ENCODE measurements at regions of chr2 and their contacts with region 1.

Region 1: GRCh38 chr2:33426666-33427231 is 49.7 kb upstream of the RASGRP3 start:
- DNase-seq: peak; percentile 70
- ATAC-seq: peak; percentile 74
- H3K4me3 ChIP-seq: no peak overlapping the region
- H3K27ac ChIP-seq: peak overlapping the region; percentile 3
- H3K4me1 ChIP-seq: peaks cover 12% of the 10 kb centered on the region
- H3K27me3 ChIP-seq: no peaks in the 10 kb centered on the region
- CTCF ChIP-seq: no peak
- POLR2A ChIP-seq: no peak
- RAD21 ChIP-seq: no peak

Region 2: GRCh38 chr2:33412920-33413319 is 13.8 kb before region 1 on chr2:
- CTCF ChIA-PET with region 1: interaction called, 6 read pairs
- POLR2A ChIA-PET with region 1: interaction called, 11 read pairs
- dilution Hi-C with region 1: no loop called
- in situ Hi-C with region 1: no loop called
- intact Hi-C with region 1: no loop called
- DNase-seq: peak; percentile 76
- ATAC-seq: peak; percentile 44; the same call in 1 of the 2 replicates
- H3K4me3 ChIP-seq: no peak overlapping the region
- H3K27ac ChIP-seq: peak overlapping the region; percentile 78; the same call in 1 of the 2 replicates
- H3K4me1 ChIP-seq: peaks cover 5% of the 10 kb centered on the region
- H3K27me3 ChIP-seq: no peaks in the 10 kb centered on the region
- CTCF ChIP-seq: peak; percentile 58
- POLR2A ChIP-seq: no peak
- RAD21 ChIP-seq: peak; percentile 61

Region 3: DNA sequence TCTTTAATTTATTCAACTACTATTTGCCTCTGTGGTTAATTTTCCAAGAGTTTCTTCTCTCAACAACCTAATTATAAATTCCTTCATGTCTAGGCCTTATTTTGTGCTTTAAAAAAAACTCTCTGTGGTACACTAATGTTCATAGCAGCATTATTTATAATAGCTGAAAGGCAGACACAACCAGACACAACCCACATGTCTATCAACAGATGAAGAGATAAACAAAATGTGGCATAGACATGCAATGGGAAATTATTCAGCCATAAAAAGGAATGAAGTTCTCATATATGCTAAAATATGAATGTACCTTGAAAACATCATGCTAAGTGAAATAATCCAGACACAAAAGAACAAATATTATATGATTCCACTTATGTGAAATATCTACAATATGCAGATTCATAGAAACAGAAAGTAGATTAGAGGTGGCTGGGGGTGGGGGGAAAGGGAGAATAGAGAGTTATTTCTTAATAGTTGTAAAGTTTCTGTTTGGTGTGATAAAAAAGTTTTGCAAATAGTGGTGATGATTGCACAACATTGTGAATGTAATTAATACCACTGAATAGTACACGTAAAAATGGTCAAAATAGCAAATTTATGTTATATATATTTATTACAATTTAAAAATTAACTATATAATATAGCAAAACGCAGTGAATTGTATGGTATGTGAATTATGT is 21.6 kb after region 1 on chr2:
- CTCF ChIA-PET with region 1: no interaction called
- POLR2A ChIA-PET with region 1: no interaction called
- dilution Hi-C with region 1: no loop called
- in situ Hi-C with region 1: no loop called
- intact Hi-C with region 1: no loop called
- DNase-seq: no peak
- ATAC-seq: no peak
- H3K4me3 ChIP-seq: no peak overlapping the region
- H3K27ac ChIP-seq: no peak overlapping the region
- H3K4me1 ChIP-seq: no peaks in the 10 kb centered on the region
- H3K27me3 ChIP-seq: no peaks in the 10 kb centered on the region
- CTCF ChIP-seq: no peak
- POLR2A ChIP-seq: no peak
- RAD21 ChIP-seq: no peak

Measured in IMR-90 (cell line).